ENCODE measurements at regions of chr13 and their contacts with region 1.

Region 1: GRCh38 chr13:76667551-76667950 is 218.7 kb downstream of the KCTD12 start:
- DNase-seq: peak; percentile 41 to 70 (median 52)
- H3K4me3 ChIP-seq: no peak overlapping the region
- H3K4me3 Mint-ChIP-seq: no peak overlapping the region
- H3K27ac ChIP-seq: no peak overlapping the region
- H3K27ac Mint-ChIP-seq: peak overlapping the region in 3 of 7 donors; percentile 24 to 41 (median 25)
- H3K4me1 ChIP-seq: peaks cover 20 to 28% of the 10 kb centered on the region in 2 donors
- H3K4me1 Mint-ChIP-seq: peaks cover 42% of the 10 kb centered on the region
- H3K27me3 ChIP-seq: no peaks in the 10 kb centered on the region
- H3K27me3 Mint-ChIP-seq: peaks cover 0 to under 1% (median 0%) of the 10 kb centered on the region in 3 donors
- CTCF ChIP-seq: peak; percentile 52

Region 2: GRCh38 chr13:76792731-76793347 is 125.3 kb after region 1 on chr13:
- intact Hi-C with region 1: loop called in 1 of 2 experiments (anchors 10 kb)
- DNase-seq: peak in 2 of 3 donors; percentile 20 to 69
- H3K4me3 ChIP-seq: no peak overlapping the region
- H3K4me3 Mint-ChIP-seq: peak overlapping the region in 1 of 2 donors; percentile 17
- H3K27ac ChIP-seq: no peak overlapping the region
- H3K27ac Mint-ChIP-seq: peak overlapping the region in 5 of 7 donors; percentile 15 to 58 (median 15)
- H3K4me1 ChIP-seq: peaks cover 14 to 27% of the 10 kb centered on the region in 2 donors
- H3K4me1 Mint-ChIP-seq: peaks cover 23% of the 10 kb centered on the region
- H3K27me3 ChIP-seq: no peaks in the 10 kb centered on the region
- H3K27me3 Mint-ChIP-seq: peaks cover 0 to 2% (median 0%) of the 10 kb centered on the region in 3 donors
- CTCF ChIP-seq: no peak

Region 3: GRCh38 chr13:77002590-77003190 is 335.1 kb after region 1 on chr13:
- intact Hi-C with region 1: no loop called
- DNase-seq: peak in 1 of 3 donors; percentile 16
- H3K4me3 ChIP-seq: no peak overlapping the region
- H3K4me3 Mint-ChIP-seq: no peak overlapping the region
- H3K27ac ChIP-seq: no peak overlapping the region
- H3K27ac Mint-ChIP-seq: peak overlapping the region in 1 of 7 donors; percentile 12
- H3K4me1 ChIP-seq: no peaks in the 10 kb centered on the region
- H3K4me1 Mint-ChIP-seq: peaks cover 2% of the 10 kb centered on the region
- H3K27me3 ChIP-seq: no peaks in the 10 kb centered on the region
- H3K27me3 Mint-ChIP-seq: no peaks in the 10 kb centered on the region
- CTCF ChIP-seq: peak; percentile 66

Measured in CD14-positive monocyte (primary cell).